Activated CD8-positive, alpha-beta T cell treated with anti-CD3 and anti-CD28 coated beads, Interleukin-2, amount 10 ng/mL, durations not matched to agents 7 days and 5 days (primary cell): ENCODE measurements at regions of chr4 and their contacts with region 1.

Region 1: GRCh38 chr4:182938205-182938645 is 21.0 kb upstream of the DCTD start:
- DNase-seq: peak; percentile 72
- ATAC-seq: peak; percentile 98
- H3K4me3 Mint-ChIP-seq: no peak overlapping the region
- H3K27ac Mint-ChIP-seq: no peak overlapping the region
- H3K4me1 Mint-ChIP-seq: peaks cover 3% of the 10 kb centered on the region
- H3K27me3 Mint-ChIP-seq: peaks cover 8% of the 10 kb centered on the region

Region 2: GRCh38 chr4:183256756-183257385 is 318.6 kb after region 1 on chr4:
- CTCF ChIA-PET with region 1: interaction called, 74 read pairs
- POLR2A ChIA-PET with region 1: no interaction called
- DNase-seq: peak; percentile 59
- ATAC-seq: peak; percentile 57
- H3K4me3 Mint-ChIP-seq: no peak overlapping the region
- H3K27ac Mint-ChIP-seq: no peak overlapping the region
- H3K4me1 Mint-ChIP-seq: no peaks in the 10 kb centered on the region
- H3K27me3 Mint-ChIP-seq: peaks cover 5% of the 10 kb centered on the region